ENCODE measurements at regions of chr17 and their contacts with region 1.

Region 1: GRCh38 chr17:4215882-4216570 is 47.8 kb downstream of the ANKFY1 start:
- DNase-seq: no peak
- H3K4me3 ChIP-seq: no peak overlapping the region
- H3K27ac ChIP-seq: no peak overlapping the region
- H3K4me1 ChIP-seq: peaks cover 0 to 20% (median 8%) of the 10 kb centered on the region in 6 donors
- H3K27me3 ChIP-seq: no peaks in the 10 kb centered on the region
- CTCF ChIP-seq: no peak
- POLR2A ChIP-seq: no peak

Region 2: GRCh38 chr17:4118015-4118743 is 97.8 kb before region 1 on chr17:
- intact Hi-C with region 1: no loop called
- DNase-seq: no peak
- H3K4me3 ChIP-seq: no peak overlapping the region
- H3K27ac ChIP-seq: peak overlapping the region in 2 of 8 donors; percentile 11 to 17
- H3K4me1 ChIP-seq: no peaks in the 10 kb centered on the region
- H3K27me3 ChIP-seq: no peaks in the 10 kb centered on the region
- CTCF ChIP-seq: no peak
- POLR2A ChIP-seq: no peak

Region 3: DNA sequence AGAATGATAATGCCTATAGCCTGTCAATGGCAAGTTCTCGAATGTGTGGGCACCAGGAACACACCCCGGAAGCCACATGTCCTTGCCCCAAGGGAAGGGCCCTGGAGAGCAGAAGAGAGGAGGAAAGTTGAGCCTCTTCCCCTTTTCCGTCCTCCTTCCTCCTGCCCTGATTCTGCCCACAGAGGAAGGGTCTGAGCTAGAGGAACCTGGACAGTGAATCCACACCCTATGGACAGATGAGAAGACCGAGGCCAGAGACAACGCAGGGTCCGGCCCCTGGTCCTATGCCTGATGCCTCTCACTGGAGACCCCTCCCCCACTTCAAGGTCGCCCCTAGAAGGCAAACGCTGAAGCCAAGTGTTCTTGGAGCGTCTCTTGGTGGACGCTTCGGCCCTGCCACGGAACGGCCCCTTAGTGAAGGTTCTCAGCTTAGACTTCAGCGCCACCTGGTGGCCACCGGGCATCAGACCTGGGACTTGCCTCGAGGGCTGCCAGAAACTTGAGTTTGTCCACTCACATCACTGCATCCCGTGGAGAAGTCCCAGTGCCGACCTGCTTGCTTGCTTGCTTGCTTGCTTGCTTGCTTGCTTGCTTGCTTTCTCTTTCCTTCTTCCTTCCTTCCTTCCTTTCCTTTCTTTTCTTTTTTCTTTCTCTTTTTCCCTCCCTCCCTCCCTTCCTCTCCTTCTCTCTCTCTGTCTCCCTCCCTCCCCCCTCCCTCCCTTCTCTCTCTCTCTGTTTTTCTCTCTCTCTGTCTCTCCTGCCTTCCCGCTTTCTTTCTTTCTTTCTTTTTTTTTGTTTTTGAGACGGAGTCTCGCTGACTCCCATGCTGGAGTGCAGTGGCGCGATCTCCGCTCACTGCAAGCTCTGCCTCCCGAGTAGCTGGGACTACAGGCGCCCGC is 197.2 kb after region 1 on chr17:
- intact Hi-C with region 1: loop called (anchors 2 kb)
- DNase-seq: peak; percentile 96
- H3K4me3 ChIP-seq: peak overlapping the region in 1 of 8 donors; percentile 46
- H3K27ac ChIP-seq: peak overlapping the region in 2 of 8 donors; percentile 9 to 26
- H3K4me1 ChIP-seq: peaks cover 0 to 11% (median 6%) of the 10 kb centered on the region in 6 donors
- H3K27me3 ChIP-seq: no peaks in the 10 kb centered on the region
- CTCF ChIP-seq: peak; percentile 80 to 96 (median 92)
- POLR2A ChIP-seq: no peak

Region 4: GRCh38 chr17:4625181-4625617 is 409.2 kb after region 1 on chr17:
- intact Hi-C with region 1: loop called (anchors 10 kb)
- DNase-seq: no peak
- H3K4me3 ChIP-seq: no peak overlapping the region
- H3K27ac ChIP-seq: no peak overlapping the region
- H3K4me1 ChIP-seq: peaks cover 0 to 12% (median 0%) of the 10 kb centered on the region in 6 donors
- H3K27me3 ChIP-seq: peaks cover 0 to 4% (median 0%) of the 10 kb centered on the region in 7 donors
- CTCF ChIP-seq: no peak
- POLR2A ChIP-seq: no peak

Measured in spleen (tissue), 13 donors.